Colonic mucosa (tissue), 4 donors: ENCODE measurements at regions of chr11 and their contacts with region 1.

Region 1: GRCh38 chr11:71977743-71978418 is 20.8 kb upstream of the IL18BP start:
- DNase-seq: peak; percentile 65
- H3K4me3 ChIP-seq: no peak overlapping the region
- H3K27ac ChIP-seq: no peak overlapping the region
- H3K4me1 ChIP-seq: no peaks in the 10 kb centered on the region
- H3K27me3 ChIP-seq: no peaks in the 10 kb centered on the region
- CTCF ChIP-seq: peak; percentile 64

Region 2: GRCh38 chr11:72430741-72431570 is 453.1 kb after region 1 on chr11:
- intact Hi-C with region 1: loop called (anchors 10 kb)
- DNase-seq: no peak
- H3K4me3 ChIP-seq: no peak overlapping the region
- H3K27ac ChIP-seq: no peak overlapping the region
- H3K4me1 ChIP-seq: no peaks in the 10 kb centered on the region
- H3K27me3 ChIP-seq: no peaks in the 10 kb centered on the region
- CTCF ChIP-seq: peak; percentile 70